ENCODE measurements at regions of chr10 and their contacts with region 1.

Region 1: GRCh38 chr10:25080880-25081581 is 64.6 kb downstream of the THNSL1 start:
- DNase-seq: no peak
- H3K4me3 ChIP-seq: no peak overlapping the region
- H3K27ac ChIP-seq: no peak overlapping the region
- H3K4me1 ChIP-seq: no peaks in the 10 kb centered on the region
- H3K27me3 ChIP-seq: no peaks in the 10 kb centered on the region
- CTCF ChIP-seq: peak; percentile 53 to 86 (median 72)
- POLR2A ChIP-seq: no peak

Region 2: GRCh38 chr10:24642622-24643417 is 438.2 kb before region 1 on chr10:
- intact Hi-C with region 1: loop called (anchors 10 kb)
- DNase-seq: no peak
- H3K4me3 ChIP-seq: no peak overlapping the region
- H3K27ac ChIP-seq: no peak overlapping the region
- H3K4me1 ChIP-seq: no peaks in the 10 kb centered on the region
- H3K27me3 ChIP-seq: no peaks in the 10 kb centered on the region
- CTCF ChIP-seq: peak; percentile 66 to 76 (median 69)
- POLR2A ChIP-seq: no peak

Region 3: GRCh38 chr10:24737001-24737400 is 344.0 kb before region 1 on chr10:
- intact Hi-C with region 1: loop called (anchors 5 kb)
- DNase-seq: peak in 1 of 2 donors; percentile 13
- H3K4me3 ChIP-seq: no peak overlapping the region
- H3K27ac ChIP-seq: no peak overlapping the region
- H3K4me1 ChIP-seq: no peaks in the 10 kb centered on the region
- H3K27me3 ChIP-seq: no peaks in the 10 kb centered on the region
- CTCF ChIP-seq: no peak
- POLR2A ChIP-seq: no peak

Region 4: DNA sequence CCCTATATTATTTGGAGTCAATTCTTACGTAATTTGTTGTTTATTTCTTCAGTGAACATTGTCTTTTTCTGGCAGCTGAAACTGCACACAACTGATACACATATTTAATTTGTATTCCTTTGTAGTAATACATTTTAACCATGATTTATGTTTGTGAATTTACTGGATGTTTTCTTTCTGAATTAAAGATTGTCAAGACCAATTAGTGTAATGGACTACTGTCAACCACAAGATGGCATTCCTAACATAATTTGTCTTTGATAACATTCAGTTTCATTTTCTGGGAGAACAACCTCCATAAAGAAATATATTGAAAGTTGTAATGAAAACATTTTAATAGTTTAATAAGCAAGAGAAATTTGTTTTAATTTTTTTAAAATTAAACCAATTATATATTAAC is 54.6 kb before region 1 on chr10:
- intact Hi-C with region 1: no loop called
- DNase-seq: no peak
- H3K4me3 ChIP-seq: no peak overlapping the region
- H3K27ac ChIP-seq: no peak overlapping the region
- H3K4me1 ChIP-seq: no peaks in the 10 kb centered on the region
- H3K27me3 ChIP-seq: no peaks in the 10 kb centered on the region
- CTCF ChIP-seq: no peak
- POLR2A ChIP-seq: no peak